ENCODE measurements at regions of chr17 and their contacts with region 1.

Region 1: DNA sequence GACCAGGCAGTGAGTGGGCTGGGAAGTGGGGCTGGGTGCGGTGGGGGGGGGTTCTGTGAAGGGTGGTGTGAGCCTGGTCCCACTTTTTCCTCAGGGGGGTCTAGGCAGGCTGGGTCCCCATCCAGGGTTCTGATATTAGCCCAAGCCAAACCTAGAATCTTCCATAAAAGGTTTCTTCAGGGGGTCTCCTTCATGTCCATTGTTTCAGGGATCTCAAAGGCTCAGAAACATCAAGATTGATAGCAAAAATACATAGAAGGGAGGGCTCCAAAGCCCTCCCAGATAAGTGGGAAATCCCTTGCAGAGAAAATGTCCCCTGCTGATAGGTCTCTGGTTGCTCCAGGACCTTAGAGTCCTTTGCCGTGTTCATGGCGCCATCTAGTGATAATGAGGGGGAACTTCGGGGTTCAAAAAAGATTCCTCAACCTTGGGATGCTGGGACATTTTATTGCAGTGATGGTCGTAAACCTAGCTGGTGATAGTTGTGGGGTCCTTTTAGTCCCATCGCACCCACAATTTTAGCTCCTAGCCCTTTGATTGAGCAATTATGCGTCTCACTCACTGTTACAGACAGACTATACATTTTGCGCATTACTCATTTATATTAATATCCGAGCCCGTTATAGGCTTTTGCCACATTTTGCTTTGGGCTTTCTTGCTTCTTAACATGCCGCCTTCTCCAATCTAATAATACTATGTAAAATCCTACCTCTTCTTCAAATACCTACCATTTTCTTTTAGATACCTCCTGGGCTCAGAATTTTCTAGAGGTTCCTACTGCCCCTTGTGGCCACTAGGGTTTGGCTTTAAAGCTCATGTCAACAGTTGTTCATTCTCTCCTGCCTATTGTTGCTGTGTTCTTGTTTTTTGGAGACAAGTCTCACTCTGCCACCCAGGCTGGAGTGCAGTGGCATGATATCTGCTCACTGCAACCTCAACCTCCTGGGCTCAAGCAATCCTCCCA is 35.1 kb downstream of the IGF2BP1 start:
- DNase-seq: peak; percentile 64
- ATAC-seq: peak; percentile 92
- H3K4me3 ChIP-seq: 0 out of 4 replicates have a peak overlapping the region, but pooled peaks of 1 of the 2 experiments have one; percentile 15
- H3K27ac ChIP-seq: no peak overlapping the region
- H3K4me1 ChIP-seq: no peaks in the 10 kb centered on the region
- H3K27me3 ChIP-seq: no peaks in the 10 kb centered on the region
- CTCF ChIP-seq: peak; percentile 98

Region 2: DNA sequence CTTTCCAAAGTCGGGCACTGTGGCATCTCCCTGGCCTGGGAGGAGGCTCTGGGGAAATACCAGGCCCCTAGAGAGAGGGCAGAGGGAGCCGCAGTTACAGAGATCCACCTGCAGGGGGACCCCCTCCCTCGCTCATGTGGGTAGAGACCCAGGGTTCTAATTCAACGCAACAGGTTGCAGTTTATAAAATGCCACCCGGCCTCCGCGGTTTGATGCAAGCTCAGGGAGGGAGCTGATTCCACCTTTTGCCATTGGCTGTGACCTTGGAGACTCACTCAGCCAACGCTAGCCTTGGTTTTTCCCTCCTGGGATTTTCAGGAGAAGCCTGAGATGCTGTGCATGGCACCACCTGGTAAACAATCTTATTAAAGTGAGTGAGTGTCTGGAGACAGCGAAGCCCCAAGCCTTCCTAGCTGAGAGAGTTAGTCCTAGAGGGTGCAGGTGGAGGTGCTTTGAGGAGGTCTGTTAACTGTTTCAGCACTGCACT is 227.3 kb before region 1 on chr17:
- CTCF ChIA-PET with region 1: interaction called, 13 read pairs
- POLR2A ChIA-PET with region 1: no interaction called
- in situ Hi-C with region 1: no loop called
- intact Hi-C with region 1: loop called (anchors 10 kb)
- DNase-seq: no peak
- ATAC-seq: peak; percentile 97
- H3K4me3 ChIP-seq: no peak overlapping the region
- H3K27ac ChIP-seq: no peak overlapping the region
- H3K4me1 ChIP-seq: peaks cover 3% of the 10 kb centered on the region; the same call in 1 of the 2 replicates
- H3K27me3 ChIP-seq: no peaks in the 10 kb centered on the region; the same call in 1 of the 2 replicates
- CTCF ChIP-seq: peak; percentile 99

Region 3: GRCh38 chr17:48915459-48916282 is 116.6 kb before region 1 on chr17:
- CTCF ChIA-PET with region 1: interaction called, 3 read pairs
- POLR2A ChIA-PET with region 1: interaction called, 14 read pairs
- in situ Hi-C with region 1: no loop called
- intact Hi-C with region 1: no loop called
- DNase-seq: no peak
- ATAC-seq: peak; percentile 81
- H3K4me3 ChIP-seq: no peak overlapping the region
- H3K27ac ChIP-seq: 0 out of 2 replicates have a peak overlapping the region, but pooled peaks have one; percentile 23
- H3K4me1 ChIP-seq: peaks cover 28% of the 10 kb centered on the region
- H3K27me3 ChIP-seq: no peaks in the 10 kb centered on the region
- CTCF ChIP-seq: no peak

Region 4: GRCh38 chr17:48928876-48929811 is 103.1 kb before region 1 on chr17:
- CTCF ChIA-PET with region 1: interaction called, 12 read pairs
- POLR2A ChIA-PET with region 1: interaction called, 9 read pairs
- in situ Hi-C with region 1: no loop called
- intact Hi-C with region 1: loop called (anchors 5 kb)
- DNase-seq: no peak
- ATAC-seq: peak; percentile 23
- H3K4me3 ChIP-seq: no peak overlapping the region
- H3K27ac ChIP-seq: peak overlapping the region; percentile 18; the same call in 1 of the 2 replicates
- H3K4me1 ChIP-seq: peaks cover 9% of the 10 kb centered on the region
- H3K27me3 ChIP-seq: no peaks in the 10 kb centered on the region
- CTCF ChIP-seq: no peak

Region 5: DNA sequence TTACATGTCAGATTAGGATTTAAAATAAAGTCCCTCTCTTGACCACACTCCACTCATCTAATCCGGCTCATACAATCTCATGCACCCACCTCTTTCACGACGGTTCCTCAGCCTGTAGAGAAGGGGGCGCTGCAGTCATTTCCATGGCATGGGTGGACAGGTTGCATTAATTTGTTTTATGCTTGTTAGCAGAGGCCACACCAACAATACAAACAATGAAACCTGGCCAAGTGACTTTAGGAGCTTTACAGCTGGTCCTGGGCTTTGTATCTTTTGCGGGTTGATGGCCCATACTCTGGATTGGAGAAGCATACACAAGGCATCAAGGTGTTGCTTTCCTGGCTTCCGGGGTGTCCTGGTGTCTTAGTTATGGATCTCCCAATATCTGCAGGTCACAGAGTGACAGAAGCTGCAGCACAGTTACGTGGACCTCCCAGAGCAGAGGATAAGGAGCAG is 77.9 kb before region 1 on chr17:
- CTCF ChIA-PET with region 1: interaction called, 15 read pairs
- POLR2A ChIA-PET with region 1: no interaction called
- in situ Hi-C with region 1: no loop called
- intact Hi-C with region 1: loop called (anchors 2 kb)
- DNase-seq: no peak
- ATAC-seq: peak; percentile 93
- H3K4me3 ChIP-seq: no peak overlapping the region
- H3K27ac ChIP-seq: no peak overlapping the region
- H3K4me1 ChIP-seq: peaks cover 13% of the 10 kb centered on the region
- H3K27me3 ChIP-seq: no peaks in the 10 kb centered on the region
- CTCF ChIP-seq: peak; percentile 95

Region 6: GRCh38 chr17:48961516-48962233 is 70.6 kb before region 1 on chr17:
- CTCF ChIA-PET with region 1: interaction called, 27 read pairs
- POLR2A ChIA-PET with region 1: no interaction called
- in situ Hi-C with region 1: no loop called
- intact Hi-C with region 1: no loop called
- DNase-seq: no peak
- ATAC-seq: peak; percentile 92
- H3K4me3 ChIP-seq: peak overlapping the region in 1 of 2 experiments; percentile 38; a peak in 2 of 4 replicates
- H3K27ac ChIP-seq: peak overlapping the region; percentile 25
- H3K4me1 ChIP-seq: peaks cover 17% of the 10 kb centered on the region
- H3K27me3 ChIP-seq: no peaks in the 10 kb centered on the region
- CTCF ChIP-seq: no peak

Region 7: DNA sequence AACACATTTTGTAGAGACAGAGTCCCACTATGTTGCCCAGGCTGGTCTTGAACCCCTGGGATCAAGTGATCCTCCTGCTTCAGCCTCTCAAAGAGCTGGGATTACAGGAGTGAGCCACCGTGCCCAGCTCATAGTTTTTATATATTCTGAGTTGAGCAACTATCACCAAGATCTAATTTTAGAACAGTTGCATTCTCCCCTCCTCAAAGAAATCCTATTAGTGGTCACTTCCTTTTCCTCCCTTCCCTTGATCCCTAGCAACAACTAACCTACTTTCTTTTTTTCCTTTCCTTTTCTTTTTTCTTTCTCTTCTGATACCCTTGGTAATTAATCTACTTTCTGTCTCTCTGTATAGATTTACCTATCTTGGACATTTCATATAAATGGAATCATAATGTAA is 38.9 kb after region 1 on chr17:
- CTCF ChIA-PET with region 1: no interaction called
- POLR2A ChIA-PET with region 1: no interaction called
- in situ Hi-C with region 1: no loop called
- intact Hi-C with region 1: no loop called
- DNase-seq: no peak
- ATAC-seq: no peak
- H3K4me3 ChIP-seq: no peak overlapping the region
- H3K27ac ChIP-seq: no peak overlapping the region
- H3K4me1 ChIP-seq: no peaks in the 10 kb centered on the region
- H3K27me3 ChIP-seq: no peaks in the 10 kb centered on the region
- CTCF ChIP-seq: no peak

Region 8: GRCh38 chr17:49556223-49556971 is 524.1 kb after region 1 on chr17:
- CTCF ChIA-PET with region 1: no interaction called
- POLR2A ChIA-PET with region 1: no interaction called
- in situ Hi-C with region 1: no loop called
- intact Hi-C with region 1: no loop called
- DNase-seq: no peak
- ATAC-seq: peak; percentile 92
- H3K4me3 ChIP-seq: peak overlapping the region in 1 of 2 experiments; percentile 2; a peak in 1 of 4 replicates
- H3K27ac ChIP-seq: no peak overlapping the region; the same call in 1 of the 2 replicates
- H3K4me1 ChIP-seq: peaks cover 4% of the 10 kb centered on the region; the same call in 1 of the 2 replicates
- H3K27me3 ChIP-seq: no peaks in the 10 kb centered on the region
- CTCF ChIP-seq: peak; percentile 99

Region 9: GRCh38 chr17:50668838-50669581 is 1636.8 kb after region 1 on chr17:
- CTCF ChIA-PET with region 1: interaction called, 11 read pairs
- POLR2A ChIA-PET with region 1: no interaction called
- in situ Hi-C with region 1: no loop called
- intact Hi-C with region 1: no loop called
- DNase-seq: no peak
- ATAC-seq: no peak
- H3K4me3 ChIP-seq: no peak overlapping the region
- H3K27ac ChIP-seq: peak overlapping the region; percentile 57
- H3K4me1 ChIP-seq: peaks cover 19% of the 10 kb centered on the region
- H3K27me3 ChIP-seq: no peaks in the 10 kb centered on the region
- CTCF ChIP-seq: no peak